ENCODE measurements at regions of chr2 and their contacts with region 1.

Region 1: DNA sequence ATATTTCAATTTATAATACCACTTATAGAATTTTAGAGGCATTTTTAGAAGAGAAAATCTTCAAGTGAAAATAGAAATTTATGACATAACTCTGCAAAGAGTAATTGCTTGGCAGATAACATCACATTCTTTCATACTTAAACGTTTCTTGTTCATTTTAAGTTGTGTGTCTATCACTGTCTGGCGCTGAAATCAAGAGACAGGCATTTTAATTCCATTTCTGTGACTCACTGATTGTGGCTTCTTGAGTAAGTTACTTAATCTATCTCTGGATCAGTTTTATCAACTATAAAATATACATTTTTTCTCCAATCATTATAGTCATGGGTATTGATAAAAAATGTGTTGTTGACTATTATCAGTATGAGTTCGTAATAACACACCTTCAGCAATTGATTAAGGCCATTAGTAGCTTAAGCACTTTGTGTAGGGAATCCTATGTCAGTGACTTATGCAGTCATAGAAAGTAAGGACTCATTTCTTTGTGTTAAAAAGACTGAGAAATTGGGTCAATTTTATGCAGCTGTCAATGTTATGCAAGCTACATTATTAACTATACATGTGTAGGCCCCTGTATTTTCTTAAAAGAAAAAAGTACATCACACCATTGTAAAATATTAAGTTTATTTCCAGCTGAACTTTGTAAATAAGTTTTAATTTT is 497.3 kb downstream of the CCDC85A start:
- DNase-seq: peak; percentile 72
- H3K4me3 ChIP-seq: no peak overlapping the region
- H3K27ac ChIP-seq: peak overlapping the region; percentile 84
- H3K4me1 ChIP-seq: peaks cover 26% of the 10 kb centered on the region
- H3K27me3 ChIP-seq: no peaks in the 10 kb centered on the region
- CTCF ChIP-seq: no peak
- POLR2A ChIP-seq: peak; percentile 35

Region 2: DNA sequence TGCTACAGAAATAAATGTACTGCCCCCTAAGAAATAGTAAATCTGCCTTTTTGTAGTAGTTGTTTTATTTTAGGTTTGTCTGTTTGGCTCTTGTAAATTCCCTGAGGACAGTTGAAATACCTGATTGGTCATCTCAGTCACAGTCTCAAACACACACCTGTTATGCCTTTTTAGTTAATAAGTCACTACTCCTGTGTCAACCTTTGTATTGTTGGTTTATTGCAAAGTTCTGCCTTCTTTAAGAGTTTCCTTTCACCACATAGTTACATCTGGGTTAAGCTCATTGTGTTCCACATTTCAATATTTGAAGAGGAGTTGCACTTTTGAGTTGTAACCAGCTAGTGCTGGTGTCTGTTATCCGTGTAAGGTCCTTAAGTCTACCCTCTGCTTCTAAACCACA is 298.6 kb before region 1 on chr2:
- CTCF ChIA-PET with region 1: no interaction called
- POLR2A ChIA-PET with region 1: no interaction called
- dilution Hi-C with region 1: no loop called
- intact Hi-C with region 1: loop called (anchors 10 kb)
- DNase-seq: no peak
- H3K4me3 ChIP-seq: no peak overlapping the region
- H3K27ac ChIP-seq: no peak overlapping the region
- H3K4me1 ChIP-seq: no peaks in the 10 kb centered on the region
- H3K27me3 ChIP-seq: no peaks in the 10 kb centered on the region
- CTCF ChIP-seq: no peak
- POLR2A ChIP-seq: no peak

Region 3: GRCh38 chr2:56741601-56742102 is 60.6 kb after region 1 on chr2:
- CTCF ChIA-PET with region 1: interaction called, 3 read pairs
- POLR2A ChIA-PET with region 1: no interaction called
- dilution Hi-C with region 1: no loop called
- intact Hi-C with region 1: loop called (anchors 1 kb)
- DNase-seq: peak; percentile 67
- H3K4me3 ChIP-seq: no peak overlapping the region
- H3K27ac ChIP-seq: peak overlapping the region; percentile 12
- H3K4me1 ChIP-seq: no peaks in the 10 kb centered on the region
- H3K27me3 ChIP-seq: no peaks in the 10 kb centered on the region
- CTCF ChIP-seq: no peak
- POLR2A ChIP-seq: no peak

Region 4: DNA sequence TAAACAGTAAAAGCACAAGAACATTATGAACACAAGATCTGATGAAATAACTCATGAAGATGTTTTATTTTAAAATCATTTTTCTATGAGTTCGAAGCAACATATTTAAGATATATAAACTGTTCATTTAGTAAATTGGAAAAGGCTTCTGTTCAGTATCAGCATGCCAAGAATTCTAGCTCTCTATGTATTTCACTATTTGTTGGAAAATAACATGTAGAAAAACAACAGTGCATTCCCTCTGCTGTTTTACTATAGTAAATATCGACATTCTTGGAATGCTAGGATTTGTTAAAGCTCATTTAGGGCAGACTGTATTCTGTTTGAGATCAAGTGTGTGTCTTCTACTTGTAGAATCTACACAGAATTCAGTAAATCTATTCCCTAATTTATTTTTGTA is 252.9 kb after region 1 on chr2:
- CTCF ChIA-PET with region 1: no interaction called
- POLR2A ChIA-PET with region 1: no interaction called
- dilution Hi-C with region 1: no loop called
- intact Hi-C with region 1: no loop called
- DNase-seq: no peak
- H3K4me3 ChIP-seq: no peak overlapping the region
- H3K27ac ChIP-seq: no peak overlapping the region
- H3K4me1 ChIP-seq: no peaks in the 10 kb centered on the region
- H3K27me3 ChIP-seq: no peaks in the 10 kb centered on the region
- CTCF ChIP-seq: no peak
- POLR2A ChIP-seq: no peak

Region 5: DNA sequence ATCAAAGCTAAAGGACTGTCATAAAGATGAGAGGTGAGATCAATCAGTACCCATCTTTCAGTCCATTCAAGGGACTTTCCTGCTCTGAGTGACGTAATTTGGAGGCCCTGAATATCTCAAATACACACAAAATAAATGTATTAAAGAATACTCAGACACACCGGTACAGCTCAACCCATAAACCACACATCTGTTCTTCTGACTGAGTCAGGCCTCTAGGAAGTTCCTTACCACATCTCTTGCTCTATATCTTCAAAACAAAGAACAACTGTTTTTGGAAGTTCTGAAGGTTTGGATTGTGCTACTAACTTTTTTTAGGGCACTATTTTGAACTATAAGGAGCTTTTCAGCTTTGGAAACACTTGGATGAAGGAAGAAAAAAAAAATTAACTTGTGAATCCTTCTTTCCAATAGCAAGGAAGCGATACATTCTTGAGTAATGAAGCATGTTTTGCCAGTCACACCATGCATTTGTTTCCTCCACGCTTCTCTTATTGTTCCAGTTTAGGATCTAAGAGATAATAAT is 499.0 kb after region 1 on chr2:
- CTCF ChIA-PET with region 1: no interaction called
- POLR2A ChIA-PET with region 1: no interaction called
- dilution Hi-C with region 1: no loop called
- intact Hi-C with region 1: loop called (anchors 2 kb)
- DNase-seq: peak; percentile 90
- H3K4me3 ChIP-seq: no peak overlapping the region
- H3K27ac ChIP-seq: peak overlapping the region; percentile 95
- H3K4me1 ChIP-seq: peaks cover 42% of the 10 kb centered on the region
- H3K27me3 ChIP-seq: no peaks in the 10 kb centered on the region
- CTCF ChIP-seq: no peak
- POLR2A ChIP-seq: peak; percentile 44